Left ventricle myocardium inferior (tissue), 1 donor: ENCODE measurements at regions of chr11 and their contacts with region 1.

Region 1: GRCh38 chr11:2549876-2550620 is 105.2 kb downstream of the KCNQ1 start:
- DNase-seq: peak; percentile 50
- H3K4me3 ChIP-seq: no peak overlapping the region
- H3K27ac ChIP-seq: no peak overlapping the region
- H3K4me1 ChIP-seq: peaks cover 16% of the 10 kb centered on the region
- H3K27me3 ChIP-seq: no peaks in the 10 kb centered on the region
- CTCF ChIP-seq: no peak

Region 2: DNA sequence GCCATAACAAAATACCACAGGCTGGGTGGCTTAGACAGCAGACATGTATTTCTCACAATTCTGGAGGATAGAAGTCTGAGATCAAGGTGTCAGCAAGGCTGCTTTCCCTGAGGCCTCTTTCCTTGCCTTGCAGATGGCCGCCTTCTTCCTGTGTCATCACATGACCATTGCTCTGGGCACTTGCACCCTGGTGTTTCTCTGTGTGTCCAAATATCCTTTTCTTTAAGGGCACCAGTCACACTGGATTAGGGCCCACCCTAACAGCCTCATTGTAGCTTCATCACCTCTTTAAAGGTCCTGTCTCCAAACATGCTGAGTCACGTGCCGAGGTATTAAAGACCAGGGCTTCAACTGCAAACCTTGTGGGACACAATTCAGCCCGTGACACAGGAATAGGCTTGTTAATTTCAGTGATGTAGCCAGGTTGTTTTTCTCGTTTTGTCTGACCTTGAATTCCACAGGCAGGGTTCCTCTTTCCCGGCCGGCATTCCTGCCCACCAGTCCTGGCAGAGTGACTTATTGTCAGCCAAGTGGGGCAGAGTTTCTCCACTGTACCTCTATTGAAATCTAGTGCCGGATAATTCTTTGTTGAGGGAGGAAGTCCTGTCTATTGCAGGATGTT is 49.6 kb after region 1 on chr11:
- intact Hi-C with region 1: loop called (anchors 10 kb)
- DNase-seq: no peak
- H3K4me3 ChIP-seq: no peak overlapping the region
- H3K27ac ChIP-seq: peak overlapping the region; percentile 13
- H3K4me1 ChIP-seq: peaks cover 14% of the 10 kb centered on the region
- H3K27me3 ChIP-seq: no peaks in the 10 kb centered on the region
- CTCF ChIP-seq: no peak